IMR-90 (cell line): ENCODE measurements at regions of chr6 and their contacts with region 1.

Region 1: DNA sequence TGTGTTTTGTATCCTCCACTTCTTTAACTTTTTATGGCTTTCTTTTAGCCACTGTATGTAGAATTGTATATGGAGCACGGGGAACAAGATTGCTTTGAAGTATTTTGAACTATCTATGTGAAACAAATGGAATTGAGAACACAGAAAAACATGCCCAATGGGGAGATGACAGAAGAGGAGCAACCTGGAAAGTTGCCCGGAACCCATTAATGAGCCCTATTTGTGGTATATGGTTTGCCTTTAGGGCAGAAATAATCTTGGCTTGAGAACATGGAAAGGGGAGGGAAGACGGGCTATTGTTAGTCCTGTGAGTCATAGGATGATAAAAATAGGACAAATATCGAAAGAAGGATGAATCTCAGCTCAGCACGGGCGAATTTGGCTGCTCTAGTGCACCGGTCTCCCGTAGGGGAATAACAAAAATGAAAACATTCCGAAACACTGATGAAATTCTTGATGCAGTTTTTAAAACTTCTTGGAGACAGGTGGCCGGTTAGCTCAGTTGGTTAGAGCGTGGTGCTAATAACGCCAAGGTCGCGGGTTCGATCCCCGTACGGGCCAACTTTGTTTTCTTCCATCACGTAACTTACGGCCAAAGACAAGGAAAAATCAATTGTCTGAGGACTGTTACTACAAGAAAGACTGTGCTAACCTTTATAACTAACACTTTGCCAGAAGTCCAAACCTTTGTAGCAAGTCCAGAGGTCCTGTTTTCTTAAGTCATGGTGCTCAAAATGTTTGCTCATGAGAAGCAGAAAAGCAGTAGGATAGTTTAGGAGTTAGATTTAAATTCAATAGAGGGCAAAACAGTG is 15.7 kb downstream of the HMGN4 start:
- DNase-seq: peak; percentile 92
- ATAC-seq: peak; percentile 50
- H3K4me3 ChIP-seq: peak overlapping the region; percentile 58
- H3K27ac ChIP-seq: no peak overlapping the region
- H3K4me1 ChIP-seq: no peaks in the 10 kb centered on the region
- H3K27me3 ChIP-seq: no peaks in the 10 kb centered on the region
- CTCF ChIP-seq: no peak
- POLR2A ChIP-seq: no peak
- RAD21 ChIP-seq: no peak

Region 2: GRCh38 chr6:26322645-26323482 is 231.0 kb before region 1 on chr6:
- CTCF ChIA-PET with region 1: interaction called, 3 read pairs
- POLR2A ChIA-PET with region 1: no interaction called
- dilution Hi-C with region 1: no loop called
- in situ Hi-C with region 1: no loop called
- intact Hi-C with region 1: loop called (anchors 10 kb)
- DNase-seq: peak; percentile 96
- ATAC-seq: peak; percentile 88
- H3K4me3 ChIP-seq: peak overlapping the region; percentile 61
- H3K27ac ChIP-seq: no peak overlapping the region
- H3K4me1 ChIP-seq: peaks cover 2% of the 10 kb centered on the region; the same call in 1 of the 2 replicates
- H3K27me3 ChIP-seq: no peaks in the 10 kb centered on the region
- CTCF ChIP-seq: no peak
- POLR2A ChIP-seq: no peak
- RAD21 ChIP-seq: no peak

Region 3: DNA sequence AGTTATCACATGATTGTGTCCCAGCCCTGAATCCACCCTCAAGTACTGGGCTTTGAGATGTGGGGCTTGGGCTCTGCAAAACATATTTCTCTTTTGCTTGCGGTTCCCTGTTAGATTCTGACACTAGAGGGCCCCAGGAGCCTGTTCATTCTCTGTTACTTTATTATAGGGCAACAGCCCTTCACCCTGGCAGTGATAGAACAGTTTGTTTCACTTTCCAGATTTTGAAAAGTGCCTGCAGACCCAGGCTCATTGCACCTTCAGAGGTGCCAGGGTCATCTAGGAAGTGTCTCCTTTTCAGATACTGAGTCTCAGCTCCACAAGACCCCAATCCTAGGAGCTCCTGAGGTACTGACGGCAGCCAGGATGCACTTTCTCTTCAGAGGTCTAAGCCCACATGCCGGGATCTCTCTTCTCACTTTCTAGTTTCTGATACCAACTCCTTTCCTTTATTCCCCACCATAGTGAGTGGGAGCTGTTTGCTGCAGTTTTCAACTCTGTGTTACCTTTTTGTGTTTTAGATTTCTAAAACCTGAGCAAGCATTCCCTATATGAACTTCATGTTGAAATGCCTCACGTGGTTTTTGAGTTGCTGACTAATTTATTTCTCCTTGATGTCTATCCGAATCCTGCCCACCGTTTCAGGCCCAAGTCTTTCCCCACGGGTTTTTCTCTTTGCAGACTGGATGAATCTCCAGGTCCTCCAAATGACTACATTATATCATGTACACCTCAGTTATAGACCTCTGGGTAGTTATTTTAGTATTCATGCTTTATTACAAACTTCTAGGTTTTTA is 53.8 kb after region 1 on chr6:
- CTCF ChIA-PET with region 1: no interaction called
- POLR2A ChIA-PET with region 1: no interaction called
- dilution Hi-C with region 1: no loop called
- in situ Hi-C with region 1: no loop called
- intact Hi-C with region 1: no loop called
- DNase-seq: peak; percentile 58
- ATAC-seq: peak; percentile 99
- H3K4me3 ChIP-seq: peak overlapping the region; percentile 44
- H3K27ac ChIP-seq: no peak overlapping the region
- H3K4me1 ChIP-seq: no peaks in the 10 kb centered on the region
- H3K27me3 ChIP-seq: peaks cover 17% of the 10 kb centered on the region
- CTCF ChIP-seq: peak; percentile 85
- POLR2A ChIP-seq: no peak
- RAD21 ChIP-seq: peak; percentile 83